CD8-positive, alpha-beta memory T cell (primary cell): ENCODE measurements at regions of chr16 and their contacts with region 1.

Region 1: GRCh38 chr16:89507834-89508590 is at the start of gene SPG7:
- DNase-seq: peak; percentile 82 to 96 (median 90)
- H3K4me3 ChIP-seq: peak within 1 kb of the TSS; percentile 81
- H3K4me3 Mint-ChIP-seq: peak within 1 kb of the TSS; percentile 93 to 98 (median 96)
- H3K27ac ChIP-seq: peak within 1 kb of the TSS; percentile 89
- H3K27ac Mint-ChIP-seq: peak within 1 kb of the TSS; percentile 94 to 99 (median 97)
- H3K4me1 ChIP-seq: peaks cover 38% of the 10 kb centered on the region
- H3K4me1 Mint-ChIP-seq: peaks cover 27 to 45% (median 36%) of the 10 kb centered on the region in 3 donors
- H3K27me3 ChIP-seq: no peaks in the 10 kb centered on the region
- H3K27me3 Mint-ChIP-seq: no peaks in the 10 kb centered on the region
- total RNA-seq, gene SPG7: 77.4 to 79.5 TPM

Region 2: GRCh38 chr16:89241187-89242007 is 266.6 kb before region 1 on chr16:
- CTCF ChIA-PET with region 1: interaction called, 12 read pairs
- POLR2A ChIA-PET with region 1: interaction called, 4 read pairs
- DNase-seq: peak; percentile 81 to 97 (median 92)
- H3K4me3 ChIP-seq: peak overlapping the region; percentile 86
- H3K4me3 Mint-ChIP-seq: peak overlapping the region; percentile 90 to 99 (median 96)
- H3K27ac ChIP-seq: peak overlapping the region; percentile 99
- H3K27ac Mint-ChIP-seq: peak overlapping the region; percentile 97 to 100 (median 98)
- H3K4me1 ChIP-seq: peaks cover 4% of the 10 kb centered on the region
- H3K4me1 Mint-ChIP-seq: peaks cover 13 to 29% (median 14%) of the 10 kb centered on the region in 3 donors
- H3K27me3 ChIP-seq: no peaks in the 10 kb centered on the region
- H3K27me3 Mint-ChIP-seq: peaks cover 0 to 2% of the 10 kb centered on the region in 2 donors

Region 3: DNA sequence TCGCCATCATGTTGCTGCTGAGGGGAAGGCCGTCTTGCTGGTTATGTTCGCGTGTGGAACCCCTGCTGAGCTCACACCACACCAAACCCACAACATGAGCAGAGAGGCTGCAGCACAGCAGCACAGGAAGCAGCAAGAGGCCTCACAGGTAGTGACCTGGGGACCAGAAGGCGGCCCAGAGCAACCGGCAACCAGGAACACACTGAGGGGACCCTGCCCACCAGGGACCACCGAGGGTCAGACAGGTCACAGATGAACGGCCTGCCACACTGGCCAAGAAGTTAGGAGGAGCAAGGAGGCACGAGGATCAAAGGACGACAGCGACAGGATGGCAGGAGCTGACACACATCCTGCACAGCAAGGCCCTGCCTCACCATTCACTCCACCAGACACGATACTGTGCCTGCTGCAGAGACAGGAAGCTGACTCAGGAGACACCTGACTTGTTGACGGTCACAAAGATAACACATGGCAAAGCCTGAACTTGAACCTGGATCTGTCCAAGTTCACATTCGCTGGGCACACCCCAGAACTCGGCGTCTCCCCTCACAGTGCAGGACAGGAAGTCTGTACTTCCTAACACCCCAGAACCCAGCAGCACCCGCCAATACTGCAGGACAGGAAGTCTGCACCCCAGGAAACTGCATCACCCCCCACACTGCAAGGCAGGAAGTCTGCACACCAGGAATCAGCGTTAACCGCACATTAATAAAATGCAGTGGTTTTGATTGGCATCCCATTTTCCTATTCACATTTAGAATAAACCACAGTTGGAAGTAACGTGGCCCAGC is 192.0 kb before region 1 on chr16:
- CTCF ChIA-PET with region 1: interaction called, 18 read pairs
- POLR2A ChIA-PET with region 1: interaction called, 10 read pairs
- DNase-seq: peak; percentile 68 to 89 (median 80)
- H3K4me3 ChIP-seq: peak overlapping the region; percentile 51
- H3K4me3 Mint-ChIP-seq: peak overlapping the region; percentile 74 to 95 (median 81)
- H3K27ac ChIP-seq: peak overlapping the region; percentile 81
- H3K27ac Mint-ChIP-seq: peak overlapping the region; percentile 92 to 99 (median 99)
- H3K4me1 ChIP-seq: peaks cover 89% of the 10 kb centered on the region
- H3K4me1 Mint-ChIP-seq: peaks cover 87 to 100% (median 96%) of the 10 kb centered on the region in 3 donors
- H3K27me3 ChIP-seq: no peaks in the 10 kb centered on the region
- H3K27me3 Mint-ChIP-seq: peaks cover 0 to 3% of the 10 kb centered on the region in 2 donors

Region 4: DNA sequence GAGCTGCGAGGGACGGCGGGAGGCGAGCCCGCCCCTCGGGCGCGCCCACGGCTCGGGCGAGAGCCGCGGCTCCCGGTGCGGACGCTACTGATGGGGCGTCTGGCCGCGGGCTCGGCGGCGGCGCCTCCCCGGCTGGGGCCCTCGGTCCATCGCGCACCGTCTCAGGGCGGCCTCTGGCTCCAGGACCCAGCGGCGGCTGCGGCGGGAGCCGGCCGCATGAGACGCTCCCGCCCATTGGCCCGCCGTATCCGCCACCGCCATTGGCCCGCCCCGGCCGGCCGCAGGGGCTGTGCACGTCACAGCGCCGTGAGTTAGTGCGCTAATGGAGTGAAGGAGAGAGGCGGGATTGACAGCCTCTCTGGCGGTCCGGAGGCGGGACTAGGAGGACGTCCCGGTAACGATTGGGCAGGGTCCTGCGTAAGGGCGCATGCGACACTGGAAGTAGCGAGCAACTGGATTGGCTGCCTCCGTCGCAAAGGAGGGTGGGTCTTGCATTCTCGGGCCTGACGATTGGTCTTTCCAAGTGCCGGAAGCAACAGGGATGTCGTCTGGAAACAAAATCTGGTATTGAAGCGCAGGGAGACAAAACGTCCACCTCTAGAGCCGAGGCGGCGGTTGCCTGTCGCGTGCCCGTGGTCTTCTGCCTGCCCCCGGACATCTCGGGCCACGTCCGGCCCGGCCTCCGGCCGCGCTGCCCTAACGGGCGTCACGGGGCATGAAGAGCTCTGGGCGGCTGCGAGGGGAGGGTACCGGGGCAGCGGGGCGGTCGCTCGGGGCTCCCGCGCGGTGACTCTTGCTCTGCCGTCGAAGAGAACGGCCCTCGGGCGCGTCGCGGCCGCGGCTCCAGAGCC is 17.4 kb before region 1 on chr16 and contains the start of gene ANKRD11:
- CTCF ChIA-PET with region 1: interaction called, 9 read pairs
- POLR2A ChIA-PET with region 1: interaction called, 31 read pairs
- DNase-seq: peak; percentile 96 to 100 (median 99)
- H3K4me3 ChIP-seq: peak within 1 kb of the TSS; percentile 93
- H3K4me3 Mint-ChIP-seq: peak within 1 kb of the TSS; percentile 87 to 98 (median 92)
- H3K27ac ChIP-seq: peak within 1 kb of the TSS; percentile 95
- H3K27ac Mint-ChIP-seq: peak within 1 kb of the TSS; percentile 94 to 99 (median 96)
- H3K4me1 ChIP-seq: peaks cover 50% of the 10 kb centered on the region
- H3K4me1 Mint-ChIP-seq: peaks cover 57 to 75% (median 65%) of the 10 kb centered on the region in 3 donors
- H3K27me3 ChIP-seq: no peaks in the 10 kb centered on the region
- H3K27me3 Mint-ChIP-seq: peaks cover 0 to 2% of the 10 kb centered on the region in 2 donors
- total RNA-seq, gene ANKRD11: 130 to 150 TPM

Region 5: GRCh38 chr16:89898201-89898967 is 390.4 kb after region 1 on chr16:
- CTCF ChIA-PET with region 1: no interaction called
- POLR2A ChIA-PET with region 1: no interaction called
- DNase-seq: no peak
- H3K4me3 ChIP-seq: no peak overlapping the region
- H3K4me3 Mint-ChIP-seq: peak overlapping the region in 1 of 7 donors; percentile 70
- H3K27ac ChIP-seq: no peak overlapping the region
- H3K27ac Mint-ChIP-seq: peak overlapping the region in 2 of 8 donors; percentile 37 to 85
- H3K4me1 ChIP-seq: no peaks in the 10 kb centered on the region
- H3K4me1 Mint-ChIP-seq: peaks cover 0 to 2% (median 0%) of the 10 kb centered on the region in 3 donors
- H3K27me3 ChIP-seq: no peaks in the 10 kb centered on the region
- H3K27me3 Mint-ChIP-seq: no peaks in the 10 kb centered on the region